PC-9 (cell line): ENCODE measurements at regions of chr3 and their contacts with region 1.

Region 1: DNA sequence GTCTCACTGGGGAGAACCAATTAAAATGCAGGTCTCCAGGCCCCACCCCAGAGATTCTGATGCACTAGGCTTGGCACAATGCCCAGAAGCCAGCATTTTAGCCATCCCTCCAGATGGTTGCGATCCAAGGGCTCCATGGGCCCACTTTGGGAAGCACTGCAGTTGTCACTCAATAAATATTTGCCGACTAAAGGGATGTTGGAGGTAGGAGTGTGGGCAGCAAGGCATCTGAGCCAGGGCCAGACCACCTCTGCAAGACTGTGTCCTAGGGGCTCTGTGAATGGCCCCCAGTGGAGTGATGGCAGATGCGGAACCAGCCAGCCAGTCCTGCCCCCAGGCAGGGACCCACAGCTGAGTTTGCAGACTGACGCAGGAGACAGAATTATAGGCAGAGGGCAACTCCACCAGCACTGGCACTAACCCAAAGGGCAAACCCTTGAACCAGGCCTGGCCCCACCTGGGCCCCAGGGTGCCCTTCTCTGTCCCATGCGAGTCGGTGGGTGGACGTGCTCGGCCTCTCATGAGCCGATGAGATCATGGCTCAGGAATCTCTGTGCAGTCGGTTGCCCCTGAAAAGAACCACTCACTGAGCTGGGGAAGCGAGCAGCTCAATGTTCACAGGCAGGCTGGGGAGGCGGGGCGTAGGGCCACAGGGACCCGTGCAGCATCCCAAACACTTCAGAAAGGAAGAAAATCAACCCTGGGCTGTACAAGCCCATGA is 49.7 kb downstream of the SEMA5B start:
- DNase-seq: peak; percentile 90 to 93
- H3K4me3 ChIP-seq: no peak overlapping the region
- H3K27ac ChIP-seq: no peak overlapping the region
- H3K4me1 ChIP-seq: peaks cover 50% of the 10 kb centered on the region
- H3K27me3 ChIP-seq: no peaks in the 10 kb centered on the region
- CTCF ChIP-seq: no peak

Region 2: GRCh38 chr3:122754929-122755328 is 223.0 kb before region 1 on chr3:
- CTCF ChIA-PET with region 1: no interaction called
- POLR2A ChIA-PET with region 1: no interaction called
- intact Hi-C with region 1: no loop called
- DNase-seq: peak; percentile 17 to 44
- H3K4me3 ChIP-seq: no peak overlapping the region
- H3K27ac ChIP-seq: no peak overlapping the region
- H3K4me1 ChIP-seq: no peaks in the 10 kb centered on the region
- H3K27me3 ChIP-seq: no peaks in the 10 kb centered on the region
- CTCF ChIP-seq: peak; percentile 79

Region 3: GRCh38 chr3:122774564-122774963 is 203.3 kb before region 1 on chr3:
- CTCF ChIA-PET with region 1: no interaction called
- POLR2A ChIA-PET with region 1: no interaction called
- intact Hi-C with region 1: no loop called
- DNase-seq: no peak
- H3K4me3 ChIP-seq: no peak overlapping the region
- H3K27ac ChIP-seq: no peak overlapping the region
- H3K4me1 ChIP-seq: no peaks in the 10 kb centered on the region
- H3K27me3 ChIP-seq: no peaks in the 10 kb centered on the region
- CTCF ChIP-seq: no peak

Region 4: GRCh38 chr3:122816587-122816986 is 161.3 kb before region 1 on chr3:
- CTCF ChIA-PET with region 1: no interaction called
- POLR2A ChIA-PET with region 1: interaction called, 13 read pairs
- intact Hi-C with region 1: no loop called
- DNase-seq: no peak
- H3K4me3 ChIP-seq: no peak overlapping the region
- H3K27ac ChIP-seq: no peak overlapping the region
- H3K4me1 ChIP-seq: no peaks in the 10 kb centered on the region
- H3K27me3 ChIP-seq: no peaks in the 10 kb centered on the region
- CTCF ChIP-seq: no peak

Region 5: GRCh38 chr3:122902326-122902725 is 75.6 kb before region 1 on chr3:
- CTCF ChIA-PET with region 1: no interaction called
- POLR2A ChIA-PET with region 1: interaction called, 18 read pairs
- intact Hi-C with region 1: no loop called
- DNase-seq: peak; percentile 29 to 39
- H3K4me3 ChIP-seq: no peak overlapping the region
- H3K27ac ChIP-seq: no peak overlapping the region
- H3K4me1 ChIP-seq: peaks cover 10% of the 10 kb centered on the region
- H3K27me3 ChIP-seq: no peaks in the 10 kb centered on the region
- CTCF ChIP-seq: no peak

Region 6: GRCh38 chr3:123152687-123153086 is 174.8 kb after region 1 on chr3:
- CTCF ChIA-PET with region 1: no interaction called
- POLR2A ChIA-PET with region 1: no interaction called
- intact Hi-C with region 1: no loop called
- DNase-seq: no peak
- H3K4me3 ChIP-seq: no peak overlapping the region
- H3K27ac ChIP-seq: no peak overlapping the region
- H3K4me1 ChIP-seq: no peaks in the 10 kb centered on the region
- H3K27me3 ChIP-seq: no peaks in the 10 kb centered on the region
- CTCF ChIP-seq: no peak

Region 7: DNA sequence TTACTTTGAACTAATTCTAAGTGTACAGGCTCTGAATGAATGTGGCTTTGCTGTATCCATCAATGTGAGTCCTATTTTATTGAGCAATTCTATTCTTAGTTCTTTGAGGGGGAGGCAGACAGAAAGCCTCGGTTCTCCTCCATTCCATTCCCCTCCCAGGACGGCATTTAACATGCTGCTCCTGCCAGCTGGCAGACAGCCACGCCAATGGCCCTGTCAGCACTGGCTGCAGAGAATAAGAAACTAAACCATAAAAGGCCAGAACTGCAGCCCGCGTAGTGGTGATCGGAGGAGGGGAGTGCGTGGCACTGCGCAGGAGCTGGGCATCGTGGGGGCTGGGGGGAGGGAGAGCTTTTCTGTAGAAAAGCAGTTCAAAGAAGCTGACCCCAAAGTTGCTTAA is 683.0 kb after region 1 on chr3:
- CTCF ChIA-PET with region 1: no interaction called
- POLR2A ChIA-PET with region 1: no interaction called
- intact Hi-C with region 1: no loop called
- DNase-seq: no peak
- H3K4me3 ChIP-seq: no peak overlapping the region
- H3K27ac ChIP-seq: no peak overlapping the region
- H3K4me1 ChIP-seq: no peaks in the 10 kb centered on the region
- H3K27me3 ChIP-seq: peaks cover 17% of the 10 kb centered on the region; the same call in 1 of the 2 replicates
- CTCF ChIP-seq: no peak